HEK293 (cell line): ENCODE measurements at regions of chr17 and their contacts with region 1.

Region 1: DNA sequence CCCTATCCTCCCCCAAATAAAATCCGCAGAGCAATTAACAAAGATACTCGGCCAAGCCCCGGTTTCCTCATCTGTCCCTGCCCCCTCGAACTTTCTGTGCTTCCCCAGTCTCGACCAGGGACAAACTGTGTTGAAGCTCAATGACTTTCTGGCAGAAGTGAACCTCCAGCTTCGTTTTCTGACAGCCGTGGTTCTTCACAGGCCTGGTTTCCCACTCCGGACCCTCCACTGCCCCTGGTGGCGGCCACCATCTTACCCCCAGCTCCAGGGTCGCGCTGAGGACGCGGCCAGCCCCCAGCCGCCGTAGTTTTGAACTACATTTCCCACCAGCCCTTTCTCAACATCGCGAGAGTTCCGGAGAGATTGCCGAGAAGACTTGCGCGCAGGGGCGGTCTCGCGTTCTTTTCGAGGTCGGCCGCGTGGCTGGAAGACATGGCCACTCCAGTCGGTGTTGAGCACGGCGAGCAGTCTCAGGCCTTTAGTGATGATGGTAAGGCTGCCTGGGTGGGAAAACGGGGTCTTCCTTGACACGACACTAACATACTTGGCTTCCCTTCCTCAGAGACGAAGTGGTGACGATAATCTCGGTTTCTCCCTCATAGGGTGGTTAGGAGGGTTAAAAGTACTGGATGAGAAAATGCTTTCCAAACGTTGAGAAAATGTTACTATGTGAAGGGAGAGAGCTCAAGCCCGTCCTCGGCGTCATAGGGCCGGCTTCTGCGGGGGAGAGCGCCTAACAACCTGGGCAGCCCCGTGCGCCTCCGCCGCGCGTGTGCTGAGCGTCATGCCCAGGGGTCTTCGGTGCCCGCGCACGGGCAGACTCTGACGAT is 17.7 kb downstream of the PRCD start:
- H3K4me3 ChIP-seq: peak overlapping the region; percentile 93
- H3K27ac ChIP-seq: peak overlapping the region; percentile 82
- H3K4me1 ChIP-seq: peaks cover 20% of the 10 kb centered on the region
- CTCF ChIP-seq: peak; percentile 97

Region 2: GRCh38 chr17:76506408-76507349 is 50.9 kb before region 1 on chr17:
- CTCF ChIA-PET with region 1: interaction called, 10 read pairs
- POLR2A ChIA-PET with region 1: interaction called, 7 read pairs
- H3K4me3 ChIP-seq: no peak overlapping the region
- H3K27ac ChIP-seq: no peak overlapping the region
- H3K4me1 ChIP-seq: peaks cover 3% of the 10 kb centered on the region; the same call in 1 of the 2 replicates
- CTCF ChIP-seq: peak; percentile 95

Region 3: DNA sequence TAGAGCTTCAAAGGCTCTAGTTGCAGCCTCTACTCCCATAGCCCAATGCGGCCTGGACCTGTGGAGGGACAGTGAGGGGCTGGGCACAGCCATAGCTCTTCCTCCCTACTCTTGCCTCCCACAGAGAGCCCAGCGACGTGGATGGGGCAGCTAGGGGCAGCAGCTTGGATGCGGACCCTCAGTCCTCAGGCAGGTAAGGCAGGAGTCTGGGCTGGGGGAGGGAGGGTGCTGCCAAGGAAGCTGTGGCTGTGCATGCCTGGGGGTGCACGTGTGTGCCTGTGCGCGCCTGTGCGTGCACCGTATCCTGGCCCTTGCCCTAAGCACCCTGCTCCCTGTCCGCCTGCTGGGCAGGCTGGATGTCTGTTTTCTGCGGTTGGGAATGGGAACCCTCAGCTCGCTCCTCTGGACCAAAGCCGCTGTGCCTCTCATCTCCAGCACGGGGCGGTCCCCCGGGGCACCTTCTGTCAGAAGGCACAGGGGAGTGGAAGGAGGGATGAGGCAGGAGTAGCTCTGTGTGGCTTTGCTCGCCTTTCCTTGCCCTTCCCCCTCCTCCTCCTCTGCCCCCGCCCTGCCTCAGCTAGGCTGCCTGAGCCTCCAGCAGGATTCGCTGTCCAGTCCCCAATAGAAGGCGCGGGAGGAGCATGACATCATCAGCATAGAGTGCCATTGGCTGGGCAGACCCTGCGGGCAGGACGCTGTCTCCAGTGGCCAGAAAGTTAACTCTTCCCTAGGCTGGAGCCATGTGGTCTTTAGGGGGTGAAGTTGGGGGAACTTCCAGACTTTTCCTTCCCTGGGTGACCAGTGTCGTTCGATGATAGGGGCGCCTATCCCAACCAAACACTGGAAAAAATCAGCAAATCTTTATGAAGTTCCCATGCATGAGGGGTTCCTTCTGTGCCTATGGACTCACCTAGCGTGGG is 16.9 kb before region 1 on chr17:
- CTCF ChIA-PET with region 1: interaction called, 36 read pairs
- POLR2A ChIA-PET with region 1: interaction called, 15 read pairs
- H3K4me3 ChIP-seq: peak overlapping the region; percentile 12
- H3K27ac ChIP-seq: peak overlapping the region; percentile 63
- H3K4me1 ChIP-seq: peaks cover 8% of the 10 kb centered on the region
- CTCF ChIP-seq: peak; percentile 81

Region 4: DNA sequence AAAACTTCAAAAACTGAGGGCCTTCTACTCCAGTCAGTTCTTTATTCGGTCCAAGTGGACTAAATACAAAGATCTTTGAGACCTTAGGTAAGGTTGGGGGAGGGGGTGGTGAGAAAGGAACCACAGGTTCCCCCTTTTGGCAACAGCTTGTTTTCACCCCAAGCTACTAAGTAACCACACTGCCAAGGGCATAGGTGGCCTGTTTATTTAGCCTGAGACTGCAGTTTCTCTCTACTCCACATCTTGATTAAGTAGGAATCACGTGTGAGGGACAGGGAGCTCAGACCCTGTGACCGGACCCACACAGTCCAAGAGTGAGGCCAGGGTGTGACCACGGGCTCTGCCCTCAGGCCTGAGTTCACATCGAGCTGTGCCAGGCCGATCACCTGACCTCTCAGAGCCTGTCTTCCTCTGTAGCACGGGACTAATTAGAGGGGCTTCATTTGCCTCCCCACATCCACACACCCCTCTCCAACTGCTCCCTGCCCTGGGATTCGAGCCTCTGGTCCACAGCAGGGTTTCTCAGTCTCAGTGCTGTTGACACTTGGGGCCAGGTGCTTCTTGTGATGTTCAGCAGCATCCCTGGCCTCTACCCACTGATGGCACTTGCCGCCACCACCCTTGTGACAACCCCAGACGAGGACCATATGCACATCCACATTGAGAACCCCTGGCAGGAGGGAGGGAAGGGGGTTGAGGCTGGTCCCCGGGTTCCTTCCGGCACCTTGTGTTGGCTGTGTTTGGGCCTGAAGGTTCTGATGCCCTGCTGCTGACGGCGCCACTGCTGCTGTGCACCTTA is 10.2 kb after region 1 on chr17:
- CTCF ChIA-PET with region 1: interaction called, 25 read pairs
- POLR2A ChIA-PET with region 1: interaction called, 20 read pairs
- H3K4me3 ChIP-seq: no peak overlapping the region
- H3K27ac ChIP-seq: 0 out of 2 replicates have a peak overlapping the region, but pooled peaks have one; percentile 5
- H3K4me1 ChIP-seq: no peaks in the 10 kb centered on the region
- CTCF ChIP-seq: no peak

Region 5: GRCh38 chr17:76650504-76650903 is 92.9 kb after region 1 on chr17:
- CTCF ChIA-PET with region 1: no interaction called
- POLR2A ChIA-PET with region 1: no interaction called
- H3K4me3 ChIP-seq: no peak overlapping the region
- H3K27ac ChIP-seq: no peak overlapping the region
- H3K4me1 ChIP-seq: no peaks in the 10 kb centered on the region
- CTCF ChIP-seq: no peak

Region 6: DNA sequence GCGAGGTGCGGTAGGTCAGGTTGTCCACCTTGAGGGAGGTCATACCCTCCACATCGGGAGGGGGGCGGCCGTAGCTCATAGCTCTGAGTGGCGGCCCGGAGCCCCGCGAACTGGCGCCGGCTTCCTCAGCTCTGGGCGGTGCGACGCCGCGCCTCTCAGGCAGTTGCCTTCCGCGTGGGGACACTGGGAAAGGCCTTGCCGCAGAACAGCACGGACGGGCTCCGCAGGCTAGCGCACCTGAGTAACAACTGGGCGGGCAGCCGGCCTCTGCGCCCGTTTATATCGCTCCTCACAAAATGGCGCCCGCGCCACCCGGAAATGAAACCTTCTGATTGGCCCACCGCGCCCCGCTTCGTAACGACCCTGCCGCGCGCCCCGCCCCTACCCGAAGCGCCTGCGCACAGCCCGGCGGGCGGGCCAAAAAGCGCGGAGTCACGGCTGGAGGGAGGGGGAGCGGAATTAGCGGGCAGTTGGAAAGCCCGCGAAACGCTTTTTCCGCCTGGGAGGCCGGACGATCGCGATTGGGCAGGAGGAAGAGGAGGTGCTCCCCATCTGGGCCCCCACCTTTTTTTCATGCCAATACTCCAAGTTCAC is 179.6 kb after region 1 on chr17 and contains the start of gene SRSF2:
- CTCF ChIA-PET with region 1: interaction called, 4 read pairs
- POLR2A ChIA-PET with region 1: interaction called, 13 read pairs
- H3K4me3 ChIP-seq: peak within 1 kb of the TSS; percentile 81
- H3K27ac ChIP-seq: peak within 1 kb of the TSS; percentile 99
- H3K4me1 ChIP-seq: peaks cover 19% of the 10 kb centered on the region
- CTCF ChIP-seq: peak; percentile 54